Tibial artery (tissue), 4 donors: ENCODE measurements at regions of chr13 and their contacts with region 1.

Region 1: GRCh38 chr13:95676762-95677563 is at the start of gene DNAJC3:
- DNase-seq: peak; percentile 98 to 99
- H3K4me3 ChIP-seq: peak within 1 kb of the TSS; percentile 75 to 85
- H3K27ac ChIP-seq: peak within 1 kb of the TSS; percentile 90 to 97
- H3K4me1 ChIP-seq: peaks cover 0 to 39% (median 13%) of the 10 kb centered on the region in 4 donors
- H3K27me3 ChIP-seq: no peaks in the 10 kb centered on the region
- CTCF ChIP-seq: no peak

Region 2: GRCh38 chr13:94261163-94261562 is 1415.8 kb before region 1 on chr13:
- intact Hi-C with region 1: no loop called
- DNase-seq: no peak
- H3K4me3 ChIP-seq: no peak overlapping the region
- H3K27ac ChIP-seq: no peak overlapping the region
- H3K4me1 ChIP-seq: no peaks in the 10 kb centered on the region
- H3K27me3 ChIP-seq: no peaks in the 10 kb centered on the region
- CTCF ChIP-seq: no peak

Region 3: GRCh38 chr13:95641291-95642027 is 35.5 kb before region 1 on chr13:
- intact Hi-C with region 1: loop called (anchors 2 kb)
- DNase-seq: no peak
- H3K4me3 ChIP-seq: peak overlapping the region; percentile 70 to 88
- H3K27ac ChIP-seq: peak overlapping the region in 1 of 2 donors; percentile 25
- H3K4me1 ChIP-seq: peaks cover 0 to 22% (median 18%) of the 10 kb centered on the region in 4 donors
- H3K27me3 ChIP-seq: no peaks in the 10 kb centered on the region
- CTCF ChIP-seq: no peak